ENCODE measurements at regions of chr15 and their contacts with region 1.

Region 1: DNA sequence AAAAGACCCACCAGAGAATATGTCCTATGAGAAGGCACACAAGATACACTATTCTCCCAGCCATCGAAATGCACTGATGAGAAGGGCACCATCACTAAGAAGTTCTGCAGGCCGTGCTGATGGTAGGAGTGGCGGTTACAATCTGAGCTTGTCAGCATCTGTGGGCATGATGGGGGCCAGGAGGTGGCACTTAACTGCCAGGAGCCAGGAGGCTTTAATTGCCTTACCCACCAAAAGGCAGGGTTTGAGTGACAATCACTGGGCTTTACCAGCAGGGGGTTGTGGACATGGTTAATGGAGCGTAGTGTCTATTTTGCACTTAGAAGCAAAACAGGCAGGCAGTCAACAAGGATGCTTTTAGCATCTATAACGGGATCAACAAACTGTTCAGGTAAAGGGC is 16.0 kb upstream of the SQOR start:
- DNase-seq: peak in 1 of 4 experiments; percentile 17
- ATAC-seq: no peak
- H3K4me3 ChIP-seq: no peak overlapping the region
- H3K27ac ChIP-seq: no peak overlapping the region
- H3K4me1 ChIP-seq: no peaks in the 10 kb centered on the region
- H3K27me3 ChIP-seq: 0 out of 5 replicates have a peak, but pooled peaks cover 0 to 2% of the 10 kb centered on the region in 2 experiments
- CTCF ChIP-seq: 0 out of 6 replicates have a peak, but pooled peaks of 2 of the 3 experiments have one; percentile 4 to 16
- EP300 ChIP-seq: no peak
- POLR2A ChIP-seq: no peak
- RAD21 ChIP-seq: no peak

Region 2: DNA sequence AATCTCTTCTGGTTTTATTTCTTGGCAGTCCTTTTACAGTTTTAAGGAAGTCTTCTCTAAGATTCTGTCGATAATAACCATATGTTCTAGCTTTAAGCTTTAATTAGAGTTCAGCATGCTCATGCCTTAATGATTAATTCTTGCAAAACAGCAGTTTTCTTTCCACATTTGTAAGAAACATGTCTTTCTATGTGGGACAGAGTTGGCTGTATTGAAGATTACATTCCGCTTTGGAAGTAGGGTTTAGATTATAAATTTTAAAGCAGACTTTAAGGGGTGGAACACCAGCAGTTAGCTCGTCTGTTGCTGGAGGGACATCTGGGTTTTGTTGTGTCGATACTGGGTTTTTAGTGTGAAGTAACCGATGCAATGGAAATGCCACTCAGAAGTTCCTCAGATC is 51.3 kb after region 1 on chr15:
- CTCF ChIA-PET with region 1: no interaction called
- POLR2A ChIA-PET with region 1: no interaction called
- in situ Hi-C with region 1: no loop called
- intact Hi-C with region 1: loop called (anchors 5 kb)
- DNase-seq: no peak
- ATAC-seq: no peak
- H3K4me3 ChIP-seq: no peak overlapping the region
- H3K27ac ChIP-seq: no peak overlapping the region
- H3K4me1 ChIP-seq: no peaks in the 10 kb centered on the region
- H3K27me3 ChIP-seq: peaks cover 3 to 18% of the 10 kb centered on the region in 2 experiments; a peak in 2 of 5 replicates
- CTCF ChIP-seq: no peak
- EP300 ChIP-seq: no peak
- POLR2A ChIP-seq: no peak
- RAD21 ChIP-seq: no peak

Measured in K562 (cell line).